Cardiac septum (tissue), 1 donor: ENCODE measurements at regions of chr3 and their contacts with region 1.

Region 1: GRCh38 chr3:72405943-72406566 is 442.2 kb downstream of the SHQ1 start:
- DNase-seq: no peak

Region 2: DNA sequence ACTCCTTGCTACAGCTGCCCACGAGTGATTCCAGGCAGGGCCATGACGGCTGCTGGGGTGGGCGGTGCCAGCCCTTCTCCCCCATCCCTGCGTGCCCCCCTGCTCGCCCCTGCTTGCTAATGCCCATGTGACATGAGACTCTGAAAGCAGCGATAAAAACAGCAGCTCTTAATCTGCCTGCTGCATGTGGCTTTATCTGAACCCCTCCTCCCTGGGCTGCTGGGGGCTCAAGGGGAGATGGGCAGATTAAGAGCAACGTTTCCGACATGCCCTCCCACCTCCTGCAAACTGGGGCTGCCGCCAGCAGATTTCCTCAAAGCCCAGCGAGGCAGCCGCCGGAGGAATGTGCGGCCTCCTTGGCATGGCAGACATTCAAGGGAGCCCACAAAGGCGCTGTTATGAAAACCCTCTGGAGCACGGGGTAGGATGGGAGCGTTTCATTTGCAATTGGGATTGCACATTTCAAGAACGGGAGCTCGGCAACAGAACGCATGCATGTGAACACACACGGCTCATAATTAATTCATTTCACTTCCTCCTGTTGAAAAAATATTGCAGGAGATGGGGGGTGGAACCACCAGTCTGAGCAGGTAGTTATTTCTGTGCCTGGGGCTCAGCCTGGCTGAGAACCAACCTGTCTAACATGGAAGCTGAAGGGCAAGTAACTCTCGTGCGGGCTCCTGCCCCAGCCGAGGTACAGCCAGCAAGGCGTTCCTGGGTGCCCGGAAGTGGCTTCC is 116.9 kb before region 1 on chr3:
- intact Hi-C with region 1: no loop called
- DNase-seq: no peak

Region 3: GRCh38 chr3:72391659-72392058 is 14.4 kb before region 1 on chr3:
- intact Hi-C with region 1: no loop called
- DNase-seq: no peak

Region 4: GRCh38 chr3:72439321-72440183 is 33.5 kb after region 1 on chr3:
- intact Hi-C with region 1: loop called (anchors 5 kb)
- DNase-seq: no peak

Region 5: DNA sequence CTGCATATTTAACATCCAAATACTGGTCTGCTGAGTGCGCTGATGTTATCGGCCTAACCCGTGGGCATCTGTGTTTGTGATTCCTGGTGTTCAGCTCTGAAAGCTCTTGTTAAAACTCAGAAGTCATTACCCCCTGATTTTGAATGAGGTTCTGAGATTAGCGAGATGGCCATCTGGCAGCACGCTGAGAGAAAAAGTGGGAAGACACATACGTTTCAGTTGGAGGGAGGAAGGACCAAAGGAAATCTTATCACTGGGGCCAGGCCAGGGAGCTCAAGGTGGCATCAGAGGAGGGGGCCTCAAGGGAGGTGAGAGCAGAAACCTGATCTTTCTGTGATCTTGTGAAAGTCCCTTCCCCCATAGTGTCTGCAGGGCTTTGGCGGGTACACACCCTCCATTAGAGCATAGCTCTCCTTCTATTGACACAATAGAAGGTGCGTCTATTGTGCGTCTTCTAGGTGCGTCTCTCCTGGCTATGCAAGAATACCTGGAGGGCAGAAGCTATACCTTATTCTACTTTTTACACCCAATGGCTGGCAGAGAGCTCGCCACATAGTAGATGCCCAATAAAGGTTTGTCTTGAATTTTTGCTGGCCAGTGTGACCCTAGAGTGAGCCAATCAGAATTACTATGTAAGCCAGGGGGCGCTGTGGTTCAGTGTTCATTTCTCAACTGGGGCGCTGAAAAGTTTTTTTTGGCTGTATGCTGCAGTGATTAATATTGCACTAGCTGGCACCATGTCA is 259.8 kb after region 1 on chr3:
- intact Hi-C with region 1: no loop called
- DNase-seq: no peak